Motor neuron (in vitro differentiated cells): ENCODE measurements at regions of chr7 and their contacts with region 1.

Region 1: GRCh38 chr7:51162724-51163329 is 153.8 kb downstream of the COBL start:
- ATAC-seq: peak; percentile 93 to 99 (median 97)
- H3K4me3 ChIP-seq: no peak overlapping the region
- H3K27ac ChIP-seq: peak overlapping the region in 1 of 2 donors; percentile 62
- H3K4me1 ChIP-seq: no peaks in the 10 kb centered on the region

Region 2: GRCh38 chr7:50092579-50093491 is 1070.0 kb before region 1 on chr7 and contains the start of gene ZPBP:
- in situ Hi-C with region 1: loop called in 1 of 9 experiments (anchors 25 kb)
- ATAC-seq: peak in 5 of 8 experiments; percentile 30 to 72 (median 63)
- H3K4me3 ChIP-seq: no peak within 1 kb of the TSS
- H3K27ac ChIP-seq: no peak within 1 kb of the TSS
- H3K4me1 ChIP-seq: peaks cover 2 to 6% of the 10 kb centered on the region in 2 donors
- total RNA-seq, gene ZPBP: not detected